ENCODE measurements at regions of chr12 and their contacts with region 1.

Region 1: DNA sequence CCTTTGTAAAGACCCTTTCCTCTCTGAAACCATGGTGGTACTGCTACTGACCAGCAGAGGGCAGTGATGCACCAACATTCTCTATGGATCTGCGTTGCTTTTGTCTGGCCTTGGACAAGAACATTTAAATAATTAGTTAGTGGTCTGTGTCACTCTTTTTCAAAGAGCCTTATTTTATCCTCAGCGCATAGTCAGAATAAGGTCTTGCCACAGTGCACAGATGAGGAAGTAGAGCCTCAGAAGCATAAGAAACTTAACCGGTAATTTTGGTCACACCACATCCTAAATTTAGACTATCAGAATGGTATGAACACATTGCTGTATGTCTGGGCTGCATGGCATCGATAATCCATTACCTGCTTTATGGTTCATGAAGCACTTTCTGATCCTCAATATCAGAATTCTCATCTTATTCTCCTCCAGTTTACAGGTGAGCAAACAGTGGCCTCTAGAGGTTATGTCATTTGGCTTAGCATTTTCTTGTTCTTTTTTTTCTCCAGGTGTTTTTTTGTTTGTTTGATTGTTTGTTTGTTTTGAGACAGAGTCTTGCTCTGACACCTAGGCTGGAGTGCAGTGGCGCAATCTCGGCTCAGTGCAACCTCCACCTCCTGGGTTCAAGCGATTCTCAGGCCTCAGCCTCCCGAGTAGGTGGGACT is 23.7 kb upstream of the IFT81 start:
- DNase-seq: peak; percentile 71 to 81
- H3K4me3 ChIP-seq: no peak overlapping the region
- H3K27ac ChIP-seq: peak overlapping the region; percentile 12 to 53
- H3K4me1 ChIP-seq: no peaks in the 10 kb centered on the region
- H3K27me3 ChIP-seq: no peaks in the 10 kb centered on the region
- CTCF ChIP-seq: peak; percentile 83 to 95 (median 94)
- POLR2A ChIP-seq: no peak

Region 2: GRCh38 chr12:109719236-109720022 is 381.0 kb before region 1 on chr12:
- intact Hi-C with region 1: no loop called
- DNase-seq: no peak
- H3K4me3 ChIP-seq: no peak overlapping the region
- H3K27ac ChIP-seq: no peak overlapping the region
- H3K4me1 ChIP-seq: no peaks in the 10 kb centered on the region
- H3K27me3 ChIP-seq: peaks cover 0 to 8% of the 10 kb centered on the region in 2 donors
- CTCF ChIP-seq: no peak
- POLR2A ChIP-seq: no peak

Region 3: DNA sequence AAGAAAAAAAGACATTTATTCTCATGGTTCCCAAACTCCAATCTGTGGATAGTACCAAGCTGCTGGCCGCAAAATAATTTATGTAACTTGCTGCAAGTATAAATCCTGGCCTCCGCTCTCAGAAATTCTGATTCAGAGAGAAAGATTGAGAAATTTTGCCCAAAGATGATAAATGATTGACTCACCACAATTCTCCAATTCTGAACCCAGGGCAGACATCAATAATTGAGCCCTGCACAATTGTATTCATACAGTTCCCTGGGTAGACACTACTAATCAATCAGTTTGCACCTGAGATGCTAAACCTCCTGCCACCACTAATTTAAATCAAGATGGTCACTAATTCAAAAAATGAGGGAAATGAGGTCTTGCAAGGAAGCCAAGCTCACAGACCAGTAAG is 305.4 kb before region 1 on chr12:
- intact Hi-C with region 1: no loop called
- DNase-seq: no peak
- H3K4me3 ChIP-seq: no peak overlapping the region
- H3K27ac ChIP-seq: no peak overlapping the region
- H3K4me1 ChIP-seq: no peaks in the 10 kb centered on the region
- H3K27me3 ChIP-seq: no peaks in the 10 kb centered on the region
- CTCF ChIP-seq: no peak
- POLR2A ChIP-seq: no peak

Region 4: DNA sequence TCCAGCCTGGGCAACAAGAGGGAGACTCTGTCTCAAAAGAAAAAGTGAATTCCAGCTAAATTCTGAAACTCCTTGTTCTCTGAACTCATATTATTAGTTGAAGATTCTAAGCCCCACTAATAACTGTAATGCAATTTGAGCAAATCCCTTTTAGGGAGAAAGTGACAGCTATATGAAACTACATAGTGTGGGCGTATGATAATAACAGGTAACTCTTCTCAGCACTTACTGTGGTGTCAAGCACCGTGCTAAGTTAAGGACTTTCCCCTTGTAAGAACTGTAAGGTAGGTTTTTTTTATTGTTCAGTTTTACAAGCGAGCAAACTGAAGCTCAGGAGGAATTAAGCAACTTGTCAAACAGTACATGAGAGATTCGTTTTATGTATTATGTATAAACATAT is 95.8 kb before region 1 on chr12:
- intact Hi-C with region 1: no loop called
- DNase-seq: no peak
- H3K4me3 ChIP-seq: no peak overlapping the region
- H3K27ac ChIP-seq: no peak overlapping the region
- H3K4me1 ChIP-seq: no peaks in the 10 kb centered on the region
- H3K27me3 ChIP-seq: no peaks in the 10 kb centered on the region
- CTCF ChIP-seq: no peak
- POLR2A ChIP-seq: no peak

Region 5: DNA sequence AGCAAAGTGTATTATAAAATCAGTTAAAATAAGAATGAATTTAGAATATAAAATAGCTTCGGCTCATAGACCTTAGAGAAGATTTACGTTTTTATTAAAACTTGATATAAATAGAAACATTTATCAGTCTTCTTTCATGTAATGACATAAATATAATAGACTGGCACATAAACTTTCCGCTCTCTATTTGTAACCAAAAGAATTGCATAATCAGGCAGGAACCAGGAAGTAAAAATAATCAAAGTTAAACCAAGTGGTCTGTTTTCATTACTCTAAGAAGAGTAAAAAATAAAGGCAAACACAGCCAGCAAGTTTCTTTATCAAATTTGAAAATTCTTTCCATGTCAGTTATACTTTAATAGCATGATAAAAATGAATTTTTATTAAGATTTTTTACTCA is 134.3 kb after region 1 on chr12:
- intact Hi-C with region 1: loop called (anchors 10 kb)
- DNase-seq: no peak
- H3K4me3 ChIP-seq: no peak overlapping the region
- H3K27ac ChIP-seq: peak overlapping the region; percentile 10 to 30
- H3K4me1 ChIP-seq: no peaks in the 10 kb centered on the region
- H3K27me3 ChIP-seq: no peaks in the 10 kb centered on the region
- CTCF ChIP-seq: no peak
- POLR2A ChIP-seq: no peak

Region 6: DNA sequence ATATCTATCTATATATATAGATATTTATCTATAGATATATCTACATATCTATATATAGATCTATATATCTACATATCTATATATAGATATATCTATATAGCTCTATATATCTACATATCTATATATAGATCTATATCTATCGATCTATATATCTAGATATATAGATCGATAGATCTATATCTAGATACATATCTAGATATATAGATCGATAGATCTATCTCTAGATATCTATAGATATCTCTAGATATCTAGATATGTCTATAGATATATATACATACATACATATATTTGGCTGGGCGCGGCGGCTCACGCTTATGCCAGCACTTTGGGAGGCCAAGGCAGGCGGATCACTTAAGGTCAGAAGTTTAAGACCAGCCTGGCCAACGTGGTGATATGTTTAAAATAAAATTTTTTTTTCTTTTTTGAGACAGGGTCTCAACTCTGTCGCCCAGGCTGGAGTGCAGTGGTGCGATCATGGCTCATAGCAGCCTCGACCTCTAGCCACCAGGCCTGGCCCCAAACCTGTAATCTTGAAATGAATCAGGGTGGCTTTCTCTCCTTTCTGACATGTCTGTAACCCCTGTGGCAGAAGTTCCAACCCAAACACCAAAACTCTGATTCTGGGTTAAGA is 331.6 kb after region 1 on chr12:
- intact Hi-C with region 1: loop called (anchors 5 kb)
- DNase-seq: no peak
- H3K4me3 ChIP-seq: peak overlapping the region; percentile 50 to 51
- H3K27ac ChIP-seq: peak overlapping the region in 1 of 2 donors; percentile 77
- H3K4me1 ChIP-seq: no peaks in the 10 kb centered on the region
- H3K27me3 ChIP-seq: no peaks in the 10 kb centered on the region
- CTCF ChIP-seq: no peak
- POLR2A ChIP-seq: no peak

Measured in uterus (tissue), 4 donors.